ENCODE measurements at regions of chr9 and their contacts with region 1.

Region 1: DNA sequence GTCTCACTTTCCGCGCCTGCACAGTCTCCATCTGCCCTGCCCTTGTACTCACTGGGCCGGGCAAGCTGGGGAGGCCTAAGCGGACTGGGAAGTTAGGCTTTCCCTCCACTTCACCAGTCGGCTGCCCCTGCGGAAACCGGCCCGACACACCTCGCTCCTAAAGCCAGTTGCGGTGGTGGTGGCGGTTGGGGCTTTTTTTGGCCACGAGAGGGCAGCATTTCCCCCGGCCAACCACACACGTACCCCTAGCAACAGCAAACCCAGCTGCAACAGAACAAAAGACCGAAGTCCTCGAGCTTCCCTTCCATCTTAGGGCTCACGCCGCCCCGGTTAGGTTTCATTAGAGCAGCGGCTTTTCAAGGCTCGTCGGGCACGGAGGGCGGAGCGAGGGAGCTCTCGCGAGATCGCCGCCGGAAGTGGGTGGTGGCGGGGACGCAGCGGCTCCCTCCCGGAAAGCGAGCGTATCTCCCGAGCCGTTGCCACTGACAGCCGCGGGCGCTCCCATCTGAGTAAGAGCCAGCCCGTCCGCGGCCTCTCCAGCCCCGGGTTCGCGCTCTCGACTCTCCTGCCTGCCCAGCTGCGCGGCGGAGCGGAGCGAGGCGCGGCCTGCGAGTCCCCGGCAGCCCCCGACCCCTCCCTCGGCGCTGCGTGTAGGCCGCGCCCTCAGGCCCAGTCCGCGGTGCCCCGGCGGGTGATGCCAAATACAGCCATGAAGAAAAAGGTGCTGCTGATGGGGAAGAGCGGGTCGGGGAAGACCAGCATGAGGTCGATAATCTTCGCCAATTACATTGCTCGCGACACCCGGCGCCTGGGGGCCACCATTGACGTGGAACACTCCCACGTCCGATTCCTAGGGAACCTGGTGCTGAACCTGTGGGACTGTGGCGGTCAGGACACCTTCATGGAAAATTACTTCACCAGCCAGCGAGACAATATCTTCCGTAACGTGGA is at the start of gene RRAGA:
- DNase-seq: peak; percentile 96
- H3K4me3 Mint-ChIP-seq: peak within 1 kb of the TSS; percentile 93
- H3K27ac Mint-ChIP-seq: peak within 1 kb of the TSS; percentile 98
- H3K4me1 Mint-ChIP-seq: peaks cover 37% of the 10 kb centered on the region
- H3K27me3 Mint-ChIP-seq: no peaks in the 10 kb centered on the region
- total RNA-seq, gene RRAGA: 43.8 to 45.5 TPM

Region 2: GRCh38 chr9:18229992-18230676 is 819.1 kb before region 1 on chr9:
- CTCF ChIA-PET with region 1: no interaction called
- POLR2A ChIA-PET with region 1: no interaction called
- intact Hi-C with region 1: no loop called
- DNase-seq: no peak
- H3K4me3 Mint-ChIP-seq: no peak overlapping the region
- H3K27ac Mint-ChIP-seq: no peak overlapping the region
- H3K4me1 Mint-ChIP-seq: peaks cover 2% of the 10 kb centered on the region
- H3K27me3 Mint-ChIP-seq: no peaks in the 10 kb centered on the region

Region 3: GRCh38 chr9:19028835-19029451 is 20.3 kb before region 1 on chr9:
- CTCF ChIA-PET with region 1: interaction called, 10 read pairs
- POLR2A ChIA-PET with region 1: no interaction called
- intact Hi-C with region 1: no loop called
- DNase-seq: peak; percentile 25
- H3K4me3 Mint-ChIP-seq: no peak overlapping the region
- H3K27ac Mint-ChIP-seq: no peak overlapping the region
- H3K4me1 Mint-ChIP-seq: peaks cover 8% of the 10 kb centered on the region
- H3K27me3 Mint-ChIP-seq: peaks cover 14% of the 10 kb centered on the region

Region 4: GRCh38 chr9:19102631-19103345 is 53.5 kb after region 1 on chr9 and contains the start of gene HAUS6:
- CTCF ChIA-PET with region 1: interaction called, 5 read pairs
- POLR2A ChIA-PET with region 1: interaction called, 5 read pairs
- intact Hi-C with region 1: loop called (anchors 1 kb)
- DNase-seq: peak; percentile 97
- H3K4me3 Mint-ChIP-seq: peak within 1 kb of the TSS; percentile 95
- H3K27ac Mint-ChIP-seq: peak within 1 kb of the TSS; percentile 93
- H3K4me1 Mint-ChIP-seq: peaks cover 22% of the 10 kb centered on the region
- H3K27me3 Mint-ChIP-seq: no peaks in the 10 kb centered on the region
- total RNA-seq, gene HAUS6: 28.7 to 29.8 TPM

Region 5: DNA sequence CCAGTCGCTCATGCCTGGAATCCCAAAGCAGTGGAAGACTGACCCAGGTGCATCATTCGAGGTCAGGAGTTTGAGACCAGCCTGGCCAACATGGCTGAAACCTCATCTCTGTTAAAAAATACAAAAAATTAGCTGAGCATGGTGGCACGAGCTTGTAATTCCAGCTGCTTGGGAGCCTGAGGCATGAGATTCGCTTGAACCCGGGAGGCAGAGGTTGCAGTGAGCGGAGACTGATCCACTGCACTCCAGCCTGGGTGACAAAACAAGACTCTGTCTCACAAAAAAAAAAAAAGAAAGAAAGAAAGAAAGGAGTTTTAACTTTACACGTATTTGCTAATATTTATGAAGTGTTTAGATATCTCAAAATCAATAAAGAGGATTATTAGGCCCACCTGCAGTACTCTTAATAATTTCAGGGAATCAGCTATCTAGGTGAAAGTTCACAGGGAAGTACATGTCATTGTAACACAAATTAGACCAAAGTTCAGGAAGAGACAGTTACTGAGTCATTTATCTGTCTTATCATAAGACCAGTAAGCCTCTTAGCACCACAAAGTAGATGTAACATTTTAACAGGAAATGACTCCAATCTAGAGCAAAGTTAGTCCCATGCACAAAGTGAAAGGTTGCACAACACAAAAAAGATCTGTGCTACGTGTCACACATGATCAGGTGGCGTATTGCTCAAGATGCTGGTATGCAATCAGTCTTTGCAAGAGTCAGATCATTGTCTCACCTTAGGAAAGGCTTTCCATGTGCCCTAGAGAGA is 112.2 kb after region 1 on chr9:
- CTCF ChIA-PET with region 1: interaction called, 6 read pairs
- POLR2A ChIA-PET with region 1: interaction called, 6 read pairs
- intact Hi-C with region 1: loop called (anchors 1 kb)
- DNase-seq: peak; percentile 73
- H3K4me3 Mint-ChIP-seq: peak overlapping the region; percentile 14
- H3K27ac Mint-ChIP-seq: peak overlapping the region; percentile 76
- H3K4me1 Mint-ChIP-seq: peaks cover 19% of the 10 kb centered on the region
- H3K27me3 Mint-ChIP-seq: no peaks in the 10 kb centered on the region

Region 6: GRCh38 chr9:19230356-19231125 is 181.3 kb after region 1 on chr9 and contains the start of gene DENND4C:
- CTCF ChIA-PET with region 1: interaction called, 5 read pairs
- POLR2A ChIA-PET with region 1: interaction called, 5 read pairs
- intact Hi-C with region 1: loop called (anchors 1 kb)
- DNase-seq: peak; percentile 83
- H3K4me3 Mint-ChIP-seq: no peak within 1 kb of the TSS
- H3K27ac Mint-ChIP-seq: peak within 1 kb of the TSS; percentile 62
- H3K4me1 Mint-ChIP-seq: peaks cover 10% of the 10 kb centered on the region
- H3K27me3 Mint-ChIP-seq: no peaks in the 10 kb centered on the region
- total RNA-seq, gene DENND4C: 17.8 to 20.2 TPM

Region 7: GRCh38 chr9:19408693-19409400 is 359.6 kb after region 1 on chr9 and contains the start of gene ACER2:
- CTCF ChIA-PET with region 1: no interaction called
- POLR2A ChIA-PET with region 1: no interaction called
- intact Hi-C with region 1: loop called (anchors 1 kb)
- DNase-seq: peak; percentile 96
- H3K4me3 Mint-ChIP-seq: peak within 1 kb of the TSS; percentile 95
- H3K27ac Mint-ChIP-seq: peak within 1 kb of the TSS; percentile 71
- H3K4me1 Mint-ChIP-seq: peaks cover 12% of the 10 kb centered on the region
- H3K27me3 Mint-ChIP-seq: no peaks in the 10 kb centered on the region
- total RNA-seq, gene ACER2: 1.8 TPM